Mammary epithelial cell (primary cell): ENCODE measurements at regions of chr11 and their contacts with region 1.

Region 1: GRCh38 chr11:47136327-47136726 is 40.4 kb downstream of the ARFGAP2 start:
- DNase-seq: no peak
- H3K4me3 ChIP-seq: no peak overlapping the region
- H3K27ac ChIP-seq: no peak overlapping the region
- H3K4me1 ChIP-seq: no peaks in the 10 kb centered on the region
- H3K27me3 ChIP-seq: no peaks in the 10 kb centered on the region
- CTCF ChIP-seq: no peak

Region 2: DNA sequence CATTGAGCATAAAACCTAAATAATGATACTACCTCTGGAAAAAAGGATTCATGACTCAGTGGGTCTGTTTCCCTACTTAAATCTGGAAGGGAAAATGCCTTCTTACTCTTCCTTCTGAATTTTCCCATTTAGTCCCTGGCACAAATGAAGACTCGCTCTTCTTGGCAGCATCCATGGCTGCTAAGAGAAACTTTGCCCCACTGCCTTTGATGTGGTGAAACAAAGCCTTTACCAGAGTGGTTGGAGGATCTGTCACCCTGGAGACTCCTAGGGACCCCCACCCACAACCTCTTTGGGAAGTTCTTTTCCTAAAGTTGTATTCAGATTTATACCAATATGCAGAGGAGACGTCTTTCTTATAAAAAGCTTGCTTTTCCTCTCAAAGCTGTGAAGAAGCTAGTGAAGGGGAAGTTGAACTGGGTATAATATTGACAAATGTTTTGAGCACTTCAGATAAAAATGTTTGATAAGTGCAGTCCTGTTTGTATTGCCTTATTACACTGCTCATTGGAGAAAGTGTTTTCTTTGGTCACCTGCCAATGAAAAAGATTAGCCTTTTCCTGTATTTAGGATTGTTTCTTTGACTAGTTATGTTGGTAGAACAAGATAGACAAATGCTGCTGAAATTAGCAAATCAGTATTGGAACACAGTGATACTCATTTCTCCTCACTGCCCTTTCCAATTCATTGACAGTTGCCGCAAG is 37.0 kb before region 1 on chr11:
- CTCF ChIA-PET with region 1: no interaction called
- dilution Hi-C with region 1: loop called (anchors 5 kb)
- in situ Hi-C with region 1: no loop called
- intact Hi-C with region 1: no loop called
- DNase-seq: peak; percentile 2
- H3K4me3 ChIP-seq: no peak overlapping the region
- H3K27ac ChIP-seq: no peak overlapping the region
- H3K4me1 ChIP-seq: no peaks in the 10 kb centered on the region
- H3K27me3 ChIP-seq: no peaks in the 10 kb centered on the region
- CTCF ChIP-seq: no peak